ENCODE measurements at regions of chr9 and their contacts with region 1.

Region 1: GRCh38 chr9:82223442-82223841 is 234.9 kb downstream of the SPATA31D1 start:
- DNase-seq: peak; percentile 11
- H3K4me3 ChIP-seq: no peak overlapping the region
- H3K27ac ChIP-seq: no peak overlapping the region
- H3K27me3 ChIP-seq: no peaks in the 10 kb centered on the region
- CTCF ChIP-seq: no peak

Region 2: GRCh38 chr9:82206490-82206889 is 17.0 kb before region 1 on chr9:
- CTCF ChIA-PET with region 1: no interaction called
- POLR2A ChIA-PET with region 1: no interaction called
- DNase-seq: no peak
- H3K4me3 ChIP-seq: no peak overlapping the region
- H3K27ac ChIP-seq: no peak overlapping the region
- H3K27me3 ChIP-seq: no peaks in the 10 kb centered on the region
- CTCF ChIP-seq: no peak

Region 3: GRCh38 chr9:82299870-82300269 is 76.4 kb after region 1 on chr9:
- CTCF ChIA-PET with region 1: interaction called, 12 read pairs
- POLR2A ChIA-PET with region 1: no interaction called
- DNase-seq: no peak
- H3K4me3 ChIP-seq: no peak overlapping the region
- H3K27ac ChIP-seq: no peak overlapping the region
- H3K27me3 ChIP-seq: no peaks in the 10 kb centered on the region
- CTCF ChIP-seq: no peak

Region 4: GRCh38 chr9:82331079-82331478 is 107.6 kb after region 1 on chr9:
- CTCF ChIA-PET with region 1: no interaction called
- POLR2A ChIA-PET with region 1: no interaction called
- DNase-seq: no peak
- H3K4me3 ChIP-seq: no peak overlapping the region
- H3K27ac ChIP-seq: no peak overlapping the region
- H3K27me3 ChIP-seq: no peaks in the 10 kb centered on the region
- CTCF ChIP-seq: no peak

Region 5: DNA sequence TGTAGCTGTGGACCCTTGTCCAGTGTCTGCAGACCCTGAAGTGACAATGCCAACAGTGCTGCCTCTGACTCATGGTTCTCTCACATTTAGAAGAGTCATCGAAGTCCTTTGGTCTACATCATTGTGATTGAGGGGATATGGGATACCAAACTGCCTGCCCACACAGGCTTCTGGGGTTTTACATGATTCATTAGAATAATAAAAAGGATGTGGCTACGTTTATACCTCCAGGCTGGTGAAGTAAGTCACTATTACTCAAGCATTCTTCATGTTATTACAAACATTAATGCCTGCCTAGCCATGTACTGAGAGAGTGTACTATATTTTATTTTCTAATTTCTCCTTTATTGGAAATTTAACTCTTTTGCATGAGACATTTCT is 130.8 kb after region 1 on chr9:
- CTCF ChIA-PET with region 1: no interaction called
- POLR2A ChIA-PET with region 1: no interaction called
- DNase-seq: no peak
- H3K4me3 ChIP-seq: no peak overlapping the region
- H3K27ac ChIP-seq: peak overlapping the region; percentile 67
- H3K27me3 ChIP-seq: no peaks in the 10 kb centered on the region
- CTCF ChIP-seq: no peak